CD8-positive, alpha-beta memory T cell (primary cell): ENCODE measurements at regions of chr17 and their contacts with region 1.

Region 1: DNA sequence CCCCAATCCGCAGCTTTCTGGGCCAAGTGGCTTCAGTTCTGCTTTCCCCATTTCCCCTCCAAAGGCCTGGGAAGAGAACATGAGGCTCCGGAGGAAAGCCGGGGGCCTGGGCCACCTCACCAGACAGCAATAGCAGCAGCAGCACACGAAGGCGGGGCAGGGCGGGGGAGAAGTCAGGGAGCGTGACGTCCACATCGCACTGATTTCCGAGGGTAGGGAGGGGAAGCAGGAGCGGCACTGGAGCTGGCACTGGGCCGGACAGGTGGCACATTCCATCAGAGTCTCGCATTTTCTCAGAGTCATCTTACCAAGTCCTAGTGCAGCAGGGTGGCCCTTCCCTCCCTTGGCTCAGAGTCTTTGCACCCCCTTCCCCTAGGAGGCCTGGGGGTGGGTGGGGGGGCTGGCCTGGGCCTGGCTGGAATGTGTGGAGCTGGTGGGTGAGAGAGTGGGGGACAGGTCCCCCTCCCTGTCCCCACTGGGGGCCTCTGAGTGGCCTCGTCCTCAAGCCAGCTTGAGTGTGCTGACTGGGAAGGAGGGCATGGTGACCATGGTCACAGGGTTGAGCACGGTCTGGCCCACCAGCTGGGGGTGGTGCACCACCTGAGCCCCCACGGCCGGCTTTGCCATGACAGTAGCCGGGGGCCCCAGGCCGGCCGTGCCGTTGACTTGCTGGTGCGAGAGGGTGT is 14.3 kb downstream of the MNT start:
- DNase-seq: no peak
- H3K4me3 ChIP-seq: no peak overlapping the region
- H3K4me3 Mint-ChIP-seq: no peak overlapping the region
- H3K27ac ChIP-seq: no peak overlapping the region
- H3K27ac Mint-ChIP-seq: peak overlapping the region in 3 of 8 donors; percentile 19 to 41 (median 23)
- H3K4me1 ChIP-seq: peaks cover 16% of the 10 kb centered on the region
- H3K4me1 Mint-ChIP-seq: peaks cover 2 to 36% (median 15%) of the 10 kb centered on the region in 3 donors
- H3K27me3 ChIP-seq: no peaks in the 10 kb centered on the region
- H3K27me3 Mint-ChIP-seq: peaks cover 0 to 1% of the 10 kb centered on the region in 2 donors

Region 2: DNA sequence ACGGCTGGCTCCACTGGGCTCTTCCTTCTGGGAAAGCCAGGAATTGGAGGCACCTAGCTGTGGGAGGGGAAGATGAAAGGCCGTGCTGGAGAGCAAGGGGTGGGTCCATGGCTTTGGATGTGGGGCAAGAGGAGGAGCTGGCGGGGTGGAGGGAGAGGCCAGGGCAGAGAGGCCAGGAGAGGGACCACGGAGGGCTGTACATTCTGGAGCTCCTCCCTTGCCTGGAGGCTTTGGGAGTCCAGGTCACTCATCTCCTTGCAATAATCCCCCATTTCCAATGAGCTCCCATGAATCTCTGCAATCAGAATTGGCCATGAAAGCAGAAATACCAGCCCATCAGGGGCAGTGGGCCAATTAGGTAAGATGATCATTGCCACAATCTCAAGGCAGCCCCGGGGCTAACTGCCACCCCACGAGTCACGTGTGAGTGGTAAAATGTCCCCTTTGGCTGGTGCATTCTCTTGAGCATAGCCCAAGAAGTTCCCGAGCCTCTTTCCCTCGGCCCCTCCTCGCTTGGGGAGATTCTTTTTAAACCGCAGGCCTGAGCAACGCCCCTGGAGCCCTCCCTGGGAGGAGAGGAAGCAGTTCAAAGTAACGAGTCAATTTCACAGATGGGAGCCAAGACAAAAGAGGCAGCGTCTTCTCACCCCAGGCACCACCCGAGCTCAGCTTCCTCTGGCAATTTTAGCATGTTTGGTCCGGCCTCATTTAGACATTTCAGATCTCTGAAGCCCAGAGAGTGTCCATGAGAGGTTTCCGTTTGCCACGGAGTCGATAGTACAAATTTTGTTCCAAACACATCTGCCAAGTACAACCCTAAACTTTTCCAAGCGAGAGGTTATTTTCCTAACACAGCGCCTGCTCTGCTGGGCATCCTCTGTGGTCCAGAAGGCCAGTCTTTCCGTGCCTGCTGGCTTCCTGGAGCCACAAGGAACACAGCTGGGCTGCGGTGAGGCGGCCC is 374.9 kb before region 1 on chr17:
- CTCF ChIA-PET with region 1: no interaction called
- POLR2A ChIA-PET with region 1: no interaction called
- DNase-seq: no peak
- H3K4me3 ChIP-seq: no peak overlapping the region
- H3K4me3 Mint-ChIP-seq: no peak overlapping the region
- H3K27ac ChIP-seq: no peak overlapping the region
- H3K27ac Mint-ChIP-seq: no peak overlapping the region
- H3K4me1 ChIP-seq: no peaks in the 10 kb centered on the region
- H3K4me1 Mint-ChIP-seq: no peaks in the 10 kb centered on the region
- H3K27me3 ChIP-seq: no peaks in the 10 kb centered on the region
- H3K27me3 Mint-ChIP-seq: peaks cover 4 to 22% of the 10 kb centered on the region in 2 donors

Region 3: DNA sequence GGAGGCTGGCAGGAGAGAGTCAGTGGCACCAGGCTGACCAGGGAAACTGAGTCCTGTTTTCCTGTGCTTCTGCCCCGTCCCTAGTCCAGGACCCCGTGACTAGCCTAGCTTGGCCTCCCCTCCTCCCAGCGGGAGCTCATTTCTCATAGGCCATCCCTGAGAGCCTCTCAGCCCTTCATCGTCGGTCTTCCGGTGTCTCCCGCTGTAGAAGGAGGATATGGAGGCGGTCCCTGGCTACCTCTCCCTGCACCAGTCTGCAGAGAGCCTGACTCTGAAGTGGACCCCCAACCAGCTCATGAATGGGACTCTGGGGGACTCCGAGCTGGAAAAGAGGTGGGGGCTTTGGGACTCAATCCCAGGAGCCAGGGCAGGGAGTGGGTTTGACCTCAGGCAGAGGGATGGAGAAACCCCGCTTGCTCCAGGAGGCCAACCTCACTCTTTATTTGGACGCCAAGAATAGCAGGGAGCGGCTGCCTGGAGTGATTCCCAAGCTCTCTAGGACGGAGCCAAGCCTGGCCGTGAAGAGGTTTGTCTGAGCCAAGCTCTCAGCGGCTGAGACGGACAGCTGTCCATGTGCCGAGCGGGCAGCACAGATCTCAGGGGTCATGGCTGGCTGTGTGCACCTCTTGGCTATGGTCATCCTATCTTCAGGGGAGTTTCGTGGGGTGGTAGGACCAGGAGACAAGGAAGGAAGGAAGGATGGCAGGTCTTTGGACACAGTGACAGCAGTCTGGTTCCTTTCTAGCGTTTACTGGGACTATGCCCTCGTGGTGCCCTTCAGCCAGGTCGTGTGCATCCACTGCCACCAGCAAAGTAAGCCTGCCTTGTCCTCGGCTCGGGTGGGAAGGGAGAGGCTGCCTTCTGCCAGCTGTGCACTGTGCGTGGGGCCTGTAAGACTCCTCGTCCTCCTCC is 22.4 kb before region 1 on chr17:
- CTCF ChIA-PET with region 1: interaction called, 14 read pairs
- POLR2A ChIA-PET with region 1: no interaction called
- DNase-seq: no peak
- H3K4me3 ChIP-seq: no peak overlapping the region
- H3K4me3 Mint-ChIP-seq: no peak overlapping the region
- H3K27ac ChIP-seq: no peak overlapping the region
- H3K27ac Mint-ChIP-seq: no peak overlapping the region
- H3K4me1 ChIP-seq: no peaks in the 10 kb centered on the region
- H3K4me1 Mint-ChIP-seq: no peaks in the 10 kb centered on the region
- H3K27me3 ChIP-seq: no peaks in the 10 kb centered on the region
- H3K27me3 Mint-ChIP-seq: peaks cover 0 to 2% of the 10 kb centered on the region in 2 donors

Region 4: DNA sequence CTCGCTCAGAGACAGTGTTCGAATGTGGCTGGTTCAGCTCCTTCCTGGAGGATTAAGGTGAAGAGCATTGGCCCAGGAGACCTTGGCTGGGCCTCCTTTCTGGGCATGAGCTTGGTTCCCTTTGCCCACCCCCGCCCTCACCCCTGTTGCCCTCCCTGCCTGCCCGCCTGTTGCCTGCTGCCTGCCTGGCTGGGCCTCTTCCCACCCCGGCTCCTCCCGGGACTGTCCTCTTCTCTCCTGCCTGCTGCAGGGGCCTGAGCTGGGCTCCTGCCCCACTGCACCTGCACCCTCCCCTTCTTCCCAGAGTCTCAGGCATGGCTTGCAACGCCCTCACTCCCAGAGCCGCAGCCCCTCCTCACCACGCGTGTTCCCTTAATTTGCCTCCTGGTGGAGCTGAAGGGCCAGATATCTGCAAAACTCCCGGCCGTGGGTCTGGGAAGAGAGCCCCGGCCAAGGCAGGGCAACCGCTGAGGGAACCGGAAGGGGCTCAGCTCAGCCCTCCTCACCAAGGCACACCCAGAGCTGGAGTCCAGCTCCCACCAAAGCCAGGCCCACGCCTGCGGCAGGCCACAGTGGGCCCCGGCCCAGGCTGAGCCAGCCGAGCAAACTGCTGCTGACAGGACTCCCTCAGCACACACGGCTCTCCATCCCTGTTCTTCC is 16.9 kb before region 1 on chr17:
- CTCF ChIA-PET with region 1: interaction called, 14 read pairs
- POLR2A ChIA-PET with region 1: no interaction called
- DNase-seq: no peak
- H3K4me3 ChIP-seq: no peak overlapping the region
- H3K4me3 Mint-ChIP-seq: no peak overlapping the region
- H3K27ac ChIP-seq: no peak overlapping the region
- H3K27ac Mint-ChIP-seq: no peak overlapping the region
- H3K4me1 ChIP-seq: no peaks in the 10 kb centered on the region
- H3K4me1 Mint-ChIP-seq: no peaks in the 10 kb centered on the region
- H3K27me3 ChIP-seq: no peaks in the 10 kb centered on the region
- H3K27me3 Mint-ChIP-seq: no peaks in the 10 kb centered on the region

Region 5: DNA sequence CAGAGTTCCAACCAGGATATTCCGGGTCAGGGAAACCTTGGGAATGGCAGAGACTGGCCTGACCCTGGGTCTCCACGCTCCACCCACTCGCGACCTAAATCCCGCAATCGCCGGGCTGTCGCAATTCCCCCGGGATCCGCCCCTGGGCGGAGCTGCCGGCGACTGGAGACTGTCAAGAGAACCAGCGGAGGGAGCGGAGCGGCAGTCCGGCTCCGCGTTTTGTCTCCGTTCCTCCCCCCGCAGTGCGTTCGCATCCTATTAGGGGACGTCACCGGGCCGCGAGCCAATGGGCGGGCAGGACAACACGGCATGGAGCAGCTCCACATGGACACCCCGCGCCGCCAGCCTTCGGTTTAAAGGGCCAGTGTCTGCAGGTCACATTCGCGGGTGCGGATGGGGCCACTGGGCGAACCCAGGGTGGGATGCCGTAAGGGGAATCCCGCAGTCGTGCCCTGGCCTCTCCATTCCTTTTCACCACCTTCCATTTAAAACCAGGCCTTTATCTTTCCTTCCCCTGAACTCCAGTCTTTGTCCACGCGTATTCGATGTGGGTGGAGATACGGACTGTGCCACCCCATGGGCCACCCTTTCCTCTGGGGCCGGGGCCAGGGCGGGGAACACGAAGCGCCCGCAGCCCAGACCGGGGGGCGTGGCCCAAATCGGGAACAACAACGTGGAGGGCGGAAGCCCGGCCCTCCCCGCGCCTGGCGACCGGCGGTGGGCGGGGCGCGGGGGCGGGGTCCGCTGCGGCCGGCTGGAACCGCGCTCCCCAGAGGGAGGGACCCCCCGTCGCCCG is 15.1 kb after region 1 on chr17:
- CTCF ChIA-PET with region 1: interaction called, 25 read pairs
- POLR2A ChIA-PET with region 1: interaction called, 51 read pairs
- DNase-seq: peak; percentile 99 to 100 (median 100)
- H3K4me3 ChIP-seq: peak overlapping the region; percentile 79
- H3K4me3 Mint-ChIP-seq: peak overlapping the region; percentile 90 to 100 (median 98)
- H3K27ac ChIP-seq: peak overlapping the region; percentile 96
- H3K27ac Mint-ChIP-seq: peak overlapping the region; percentile 98 to 100 (median 99)
- H3K4me1 ChIP-seq: peaks cover 35% of the 10 kb centered on the region
- H3K4me1 Mint-ChIP-seq: peaks cover 31 to 42% (median 36%) of the 10 kb centered on the region in 3 donors
- H3K27me3 ChIP-seq: no peaks in the 10 kb centered on the region
- H3K27me3 Mint-ChIP-seq: peaks cover 0 to 3% of the 10 kb centered on the region in 2 donors

Region 6: DNA sequence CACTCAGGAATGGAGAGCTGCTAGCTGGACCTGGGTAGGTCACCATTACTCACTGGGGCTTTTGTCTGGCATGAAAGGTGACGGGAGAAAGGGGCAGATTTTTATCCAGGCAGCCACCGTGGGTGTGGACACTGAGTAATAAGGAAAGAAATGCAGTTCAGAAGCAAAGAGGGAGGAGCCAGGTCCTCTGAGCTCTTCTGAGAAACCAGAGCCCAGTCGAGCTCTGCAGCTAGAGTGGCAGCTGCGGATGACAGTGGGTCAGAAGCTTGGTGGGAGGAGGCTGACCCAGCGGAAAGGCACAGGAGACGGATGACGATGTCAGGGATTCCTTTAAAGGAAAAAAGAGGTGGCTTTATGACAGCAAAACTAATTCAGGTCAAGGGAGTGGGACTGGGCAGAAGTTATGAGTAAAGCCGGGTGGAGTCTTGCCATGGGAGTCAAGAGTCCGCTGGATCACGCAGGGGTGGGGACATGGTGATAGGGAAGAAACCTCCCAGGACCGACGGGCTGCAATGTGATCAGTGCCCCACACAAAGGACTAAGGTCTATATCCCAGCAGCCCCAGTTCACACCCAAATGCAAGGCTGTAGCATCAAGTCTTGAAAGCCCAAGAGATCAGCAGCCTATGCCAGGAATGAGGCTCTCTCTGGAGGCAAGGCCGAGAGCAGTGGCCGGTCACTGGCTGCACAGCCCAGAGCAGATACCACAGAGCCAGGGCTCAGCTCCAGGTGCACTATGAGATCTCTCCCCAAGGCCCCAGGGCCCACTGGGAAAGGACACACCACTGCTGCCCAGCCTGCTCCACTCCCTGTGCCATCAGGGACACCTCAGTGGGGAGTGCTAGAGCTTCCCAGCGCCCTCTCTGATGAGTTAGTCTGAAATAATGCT is 20.6 kb after region 1 on chr17:
- CTCF ChIA-PET with region 1: interaction called, 47 read pairs
- POLR2A ChIA-PET with region 1: interaction called, 51 read pairs
- DNase-seq: no peak
- H3K4me3 ChIP-seq: no peak overlapping the region
- H3K4me3 Mint-ChIP-seq: no peak overlapping the region
- H3K27ac ChIP-seq: peak overlapping the region; percentile 31
- H3K27ac Mint-ChIP-seq: peak overlapping the region in 4 of 8 donors; percentile 14 to 93 (median 46)
- H3K4me1 ChIP-seq: peaks cover 9% of the 10 kb centered on the region
- H3K4me1 Mint-ChIP-seq: peaks cover 4 to 10% (median 10%) of the 10 kb centered on the region in 3 donors
- H3K27me3 ChIP-seq: no peaks in the 10 kb centered on the region
- H3K27me3 Mint-ChIP-seq: no peaks in the 10 kb centered on the region

Region 7: GRCh38 chr17:2427910-2428309 is 41.4 kb after region 1 on chr17:
- CTCF ChIA-PET with region 1: no interaction called
- POLR2A ChIA-PET with region 1: no interaction called
- DNase-seq: no peak
- H3K4me3 ChIP-seq: no peak overlapping the region
- H3K4me3 Mint-ChIP-seq: no peak overlapping the region
- H3K27ac ChIP-seq: no peak overlapping the region
- H3K27ac Mint-ChIP-seq: peak overlapping the region in 1 of 8 donors; percentile 58
- H3K4me1 ChIP-seq: no peaks in the 10 kb centered on the region
- H3K4me1 Mint-ChIP-seq: peaks cover 0 to 4% (median 4%) of the 10 kb centered on the region in 3 donors
- H3K27me3 ChIP-seq: no peaks in the 10 kb centered on the region
- H3K27me3 Mint-ChIP-seq: no peaks in the 10 kb centered on the region